Calu3 (cell line): ENCODE measurements at regions of chr2 and their contacts with region 1.

Region 1: DNA sequence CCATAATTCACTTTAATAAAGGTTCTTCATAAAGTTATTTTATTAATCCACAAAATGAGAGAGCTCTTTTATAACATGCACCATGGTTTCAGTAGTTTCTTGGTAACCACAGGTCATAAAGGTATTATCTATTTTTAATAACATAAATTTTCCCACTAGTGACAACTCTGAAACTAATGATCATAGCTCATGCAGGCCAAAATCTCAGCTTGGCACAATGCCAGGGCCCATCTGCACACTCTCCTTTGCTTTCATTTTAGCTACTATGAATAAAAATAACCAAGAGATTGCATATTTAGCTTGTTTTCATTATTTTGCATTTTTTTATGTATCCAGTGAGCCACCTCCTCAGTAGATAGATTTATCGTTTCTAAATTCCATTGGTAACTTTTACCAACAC is 691.8 kb upstream of the CHAC2 start:
- DNase-seq: no peak
- H3K4me3 Mint-ChIP-seq: no peak overlapping the region
- H3K27ac Mint-ChIP-seq: no peak overlapping the region
- H3K4me1 Mint-ChIP-seq: no peaks in the 10 kb centered on the region
- H3K27me3 Mint-ChIP-seq: no peaks in the 10 kb centered on the region
- CTCF ChIP-seq: no peak

Region 2: DNA sequence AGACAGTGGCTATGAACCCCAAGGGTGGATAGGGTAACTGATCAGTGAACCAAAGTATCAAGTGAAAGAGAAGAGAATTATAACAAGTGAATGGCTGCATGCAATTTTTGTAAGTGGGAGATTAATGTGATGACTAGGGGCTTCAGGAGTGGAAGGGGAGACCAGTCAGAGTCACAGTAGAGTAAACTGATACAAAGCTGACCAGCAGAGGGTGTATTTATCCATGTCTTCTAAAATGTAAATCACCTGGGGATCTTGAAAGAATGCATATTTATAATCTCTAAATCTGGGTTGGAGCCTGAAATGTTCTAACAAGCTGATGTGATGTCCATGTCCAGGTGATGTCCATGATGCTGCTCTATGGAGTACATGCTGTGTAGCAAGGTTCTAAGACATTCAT is 659.4 kb before region 1 on chr2:
- CTCF ChIA-PET with region 1: no interaction called
- intact Hi-C with region 1: loop called (anchors 5 kb)
- DNase-seq: no peak
- H3K4me3 Mint-ChIP-seq: no peak overlapping the region
- H3K27ac Mint-ChIP-seq: no peak overlapping the region
- H3K4me1 Mint-ChIP-seq: no peaks in the 10 kb centered on the region
- H3K27me3 Mint-ChIP-seq: no peaks in the 10 kb centered on the region
- CTCF ChIP-seq: no peak